ENCODE measurements at regions of chr7 and their contacts with region 1.

Region 1: DNA sequence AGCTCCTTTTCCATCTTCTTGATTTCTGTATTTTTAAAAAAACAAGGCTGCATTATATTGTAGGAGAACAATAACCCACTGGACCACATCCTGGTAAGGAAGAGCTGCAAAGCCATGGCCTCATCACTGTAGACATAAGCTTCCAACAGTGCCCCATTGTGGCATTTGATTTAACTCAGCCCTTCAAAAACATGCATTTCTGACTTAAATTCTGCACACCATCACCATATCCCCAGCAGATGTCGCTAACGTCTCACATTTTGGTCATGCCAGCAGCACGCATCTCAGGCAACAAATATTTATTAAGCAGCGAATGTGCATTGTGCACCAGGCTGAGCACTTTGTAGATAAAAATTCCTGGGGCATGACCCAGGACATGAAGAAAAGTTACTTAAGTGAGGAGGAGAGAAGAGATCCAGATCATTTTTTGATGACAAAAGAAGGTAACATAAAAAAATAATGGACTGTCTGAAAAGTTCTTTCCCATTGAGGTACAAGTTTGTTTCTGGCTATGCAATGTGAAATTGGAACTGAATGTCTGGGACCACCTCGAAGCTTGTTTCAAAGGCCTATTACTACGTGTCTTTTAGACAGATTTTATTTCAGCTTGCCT is 164.6 kb upstream of the CDCA7L start:
- DNase-seq: peak; percentile 54
- H3K4me3 Mint-ChIP-seq: no peak overlapping the region
- H3K27ac Mint-ChIP-seq: no peak overlapping the region
- H3K4me1 Mint-ChIP-seq: peaks cover 4% of the 10 kb centered on the region
- H3K27me3 Mint-ChIP-seq: peaks cover 10% of the 10 kb centered on the region

Region 2: GRCh38 chr7:22292516-22292915 is 182.2 kb after region 1 on chr7:
- intact Hi-C with region 1: loop called (anchors 5 kb)
- DNase-seq: no peak
- H3K4me3 Mint-ChIP-seq: no peak overlapping the region
- H3K27ac Mint-ChIP-seq: no peak overlapping the region
- H3K4me1 Mint-ChIP-seq: peaks cover 19% of the 10 kb centered on the region
- H3K27me3 Mint-ChIP-seq: peaks cover 55% of the 10 kb centered on the region

Region 3: DNA sequence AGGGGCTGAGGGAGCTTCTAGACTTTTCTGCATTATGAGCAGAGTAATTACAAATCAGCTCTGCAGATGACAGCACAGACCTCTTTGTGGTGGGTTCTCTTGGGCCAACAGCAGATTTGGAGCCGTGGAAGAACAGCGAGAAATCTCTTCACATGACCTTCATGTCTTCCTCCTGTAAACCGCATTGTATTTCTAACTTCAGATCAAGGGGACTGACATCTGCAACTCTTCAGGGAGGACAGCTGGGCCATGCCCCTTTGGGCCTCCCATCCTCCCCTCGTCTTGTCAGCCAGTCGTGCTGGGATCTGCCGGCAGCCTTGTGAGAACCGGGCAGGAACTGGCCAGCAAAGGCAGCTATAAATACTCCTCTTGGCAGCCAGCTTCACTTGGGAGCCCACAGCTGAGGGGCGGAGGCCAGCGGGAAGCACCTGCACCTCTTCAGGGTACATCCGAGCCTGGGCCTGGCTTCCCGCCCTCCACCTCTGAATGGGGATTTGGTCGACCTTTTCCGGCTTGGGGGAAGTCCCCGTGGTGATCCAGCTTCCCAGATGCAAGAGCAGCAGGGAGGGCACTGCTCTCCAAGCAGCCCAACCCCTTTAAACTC is 334.9 kb after region 1 on chr7:
- intact Hi-C with region 1: loop called (anchors 5 kb)
- DNase-seq: no peak
- H3K4me3 Mint-ChIP-seq: no peak overlapping the region
- H3K27ac Mint-ChIP-seq: no peak overlapping the region
- H3K4me1 Mint-ChIP-seq: peaks cover 21% of the 10 kb centered on the region
- H3K27me3 Mint-ChIP-seq: peaks cover 22% of the 10 kb centered on the region

Region 4: DNA sequence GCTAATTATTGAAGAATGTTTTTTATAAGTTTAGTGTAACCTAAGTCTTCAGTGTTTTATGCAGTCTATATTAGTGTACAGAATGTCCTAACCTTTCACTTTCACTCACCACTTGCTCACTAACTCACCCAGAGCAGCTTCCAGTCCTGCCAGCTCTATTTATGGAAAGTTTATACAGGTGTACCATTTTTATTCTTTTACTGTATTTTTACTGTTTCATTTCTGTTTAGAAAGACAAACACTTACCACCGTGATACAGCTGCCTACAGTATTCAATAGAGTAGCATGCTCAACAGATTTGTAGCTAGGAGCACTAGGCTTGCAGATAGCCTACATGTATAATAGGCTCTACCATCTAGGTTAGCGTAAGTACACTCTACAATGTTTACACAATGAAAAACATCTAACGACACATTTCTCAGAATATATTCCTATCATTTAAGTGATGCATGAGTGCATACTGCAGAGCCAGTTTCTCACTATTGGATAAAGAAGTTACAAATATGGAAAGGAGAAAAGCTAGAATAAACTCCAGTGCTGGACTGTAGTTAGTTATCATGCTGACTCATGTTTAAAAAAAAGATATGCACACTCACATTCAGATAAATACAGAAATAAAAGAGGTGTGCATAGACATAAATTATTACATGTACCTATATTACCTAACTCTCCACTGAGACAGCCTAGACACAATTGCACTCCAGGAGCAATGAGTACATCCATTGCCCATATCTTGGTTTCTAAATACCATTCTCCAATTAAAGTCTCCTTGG is 359.2 kb after region 1 on chr7:
- intact Hi-C with region 1: no loop called
- DNase-seq: no peak
- H3K4me3 Mint-ChIP-seq: no peak overlapping the region
- H3K27ac Mint-ChIP-seq: no peak overlapping the region
- H3K4me1 Mint-ChIP-seq: no peaks in the 10 kb centered on the region
- H3K27me3 Mint-ChIP-seq: peaks cover 25% of the 10 kb centered on the region

Region 5: DNA sequence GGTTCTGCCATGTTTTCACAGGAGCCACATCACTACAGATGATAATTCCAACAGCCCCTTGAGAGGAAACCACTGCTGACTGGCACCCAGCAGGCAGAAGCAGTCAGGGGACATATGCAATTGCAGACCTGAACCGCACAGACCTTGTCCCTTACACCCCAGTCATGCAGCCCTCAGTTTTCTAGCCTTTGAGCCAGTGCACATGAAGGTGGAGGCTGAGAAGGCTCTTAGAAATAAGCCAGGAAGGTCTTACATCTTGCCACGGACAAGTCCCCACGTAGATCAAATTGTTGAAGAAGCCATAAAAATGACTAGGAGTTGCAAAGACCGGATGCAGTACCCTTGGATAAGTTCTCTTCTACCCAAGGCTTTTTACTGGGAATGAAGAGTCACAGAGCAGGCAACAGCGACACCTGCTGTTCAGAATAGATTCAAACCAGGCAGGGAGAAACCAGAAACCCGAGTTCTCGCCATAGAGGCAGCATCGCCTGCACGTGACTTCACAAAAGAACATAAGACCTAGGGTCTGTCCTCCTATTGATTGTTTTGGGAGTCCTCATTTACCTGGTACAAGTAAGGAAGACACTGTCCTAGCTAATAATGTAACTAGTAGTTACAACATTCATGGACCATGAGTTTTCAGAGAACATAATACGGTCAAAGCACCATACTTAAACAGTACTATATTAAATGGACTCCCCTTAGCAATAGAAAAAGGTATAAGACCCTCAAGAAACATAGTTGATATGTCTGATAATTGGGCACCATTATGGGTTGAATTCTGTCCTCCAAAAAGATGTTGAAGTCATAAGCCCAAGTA is 378.5 kb after region 1 on chr7:
- intact Hi-C with region 1: loop called (anchors 1 kb)
- DNase-seq: peak; percentile 34
- H3K4me3 Mint-ChIP-seq: no peak overlapping the region
- H3K27ac Mint-ChIP-seq: no peak overlapping the region
- H3K4me1 Mint-ChIP-seq: peaks cover 30% of the 10 kb centered on the region
- H3K27me3 Mint-ChIP-seq: peaks cover 19% of the 10 kb centered on the region

Region 6: DNA sequence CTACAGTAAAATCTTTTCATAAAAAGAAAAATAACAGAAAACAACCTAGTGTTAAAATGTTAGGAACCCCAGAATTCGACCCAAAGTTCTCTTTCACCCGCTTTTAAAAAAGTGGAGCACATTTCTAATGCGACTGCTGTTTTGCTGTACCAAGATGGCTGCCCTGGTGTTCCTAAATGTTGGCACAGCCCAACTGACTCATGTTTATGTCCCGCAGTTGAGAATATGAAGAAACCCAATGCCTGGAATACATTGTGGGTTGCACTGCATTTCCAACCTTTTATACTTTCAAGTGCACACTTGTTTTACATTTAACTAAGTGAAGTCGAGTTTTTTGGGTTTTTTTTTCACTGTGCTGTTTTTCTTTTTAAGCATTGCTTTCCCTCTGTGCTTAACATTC is 388.7 kb after region 1 on chr7:
- intact Hi-C with region 1: loop called (anchors 1 kb)
- DNase-seq: no peak
- H3K4me3 Mint-ChIP-seq: no peak overlapping the region
- H3K27ac Mint-ChIP-seq: no peak overlapping the region
- H3K4me1 Mint-ChIP-seq: peaks cover 3% of the 10 kb centered on the region
- H3K27me3 Mint-ChIP-seq: peaks cover 44% of the 10 kb centered on the region